Breast epithelium (tissue), 4 donors: ENCODE measurements at regions of chr4 and their contacts with region 1.

Region 1: DNA sequence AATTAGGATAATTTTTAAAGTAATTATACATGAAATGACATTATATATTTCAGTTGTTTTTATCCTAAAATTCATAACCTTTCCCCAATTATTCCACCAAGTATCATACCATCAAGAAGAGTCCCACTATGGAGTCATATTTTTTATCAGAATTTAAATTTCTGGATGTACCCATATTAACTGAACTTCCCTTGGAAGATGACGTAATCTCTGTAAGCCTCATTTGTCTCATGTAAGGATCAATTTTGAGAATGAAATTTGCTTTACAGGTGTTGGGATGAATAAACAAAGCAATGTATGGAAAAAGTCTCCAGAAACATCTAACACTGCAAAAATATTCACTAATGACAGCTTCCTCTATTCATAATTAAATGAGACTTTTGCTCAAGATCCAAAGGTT is 147.5 kb downstream of the NPFFR2 start:
- DNase-seq: no peak
- H3K4me3 ChIP-seq: no peak overlapping the region
- H3K27ac ChIP-seq: no peak overlapping the region
- H3K4me1 ChIP-seq: no peaks in the 10 kb centered on the region
- H3K27me3 ChIP-seq: no peaks in the 10 kb centered on the region
- CTCF ChIP-seq: no peak
- POLR2A ChIP-seq: no peak

Region 2: DNA sequence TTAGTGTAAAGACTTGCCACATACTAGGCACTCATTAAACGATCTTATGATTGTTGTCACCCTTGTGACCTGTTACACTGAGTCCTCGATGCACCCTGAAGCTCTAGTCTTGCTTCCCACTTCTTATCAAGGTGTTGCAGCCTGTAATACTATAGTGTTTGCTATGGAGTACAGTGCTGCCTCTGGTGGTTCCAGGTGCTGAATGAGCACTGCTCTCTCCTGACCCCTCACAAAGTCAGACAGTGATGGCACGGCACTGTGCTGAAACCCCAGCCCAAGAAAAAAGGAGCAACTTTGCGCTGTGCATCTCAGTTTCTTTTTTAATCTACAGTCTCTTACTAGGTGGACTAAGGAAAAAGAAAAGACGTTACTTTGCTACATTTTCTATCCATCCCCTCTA is 501.8 kb before region 1 on chr4:
- intact Hi-C with region 1: loop called (anchors 5 kb)
- DNase-seq: no peak
- H3K4me3 ChIP-seq: no peak overlapping the region
- H3K27ac ChIP-seq: no peak overlapping the region
- H3K4me1 ChIP-seq: no peaks in the 10 kb centered on the region
- H3K27me3 ChIP-seq: no peaks in the 10 kb centered on the region
- CTCF ChIP-seq: no peak
- POLR2A ChIP-seq: no peak

Region 3: DNA sequence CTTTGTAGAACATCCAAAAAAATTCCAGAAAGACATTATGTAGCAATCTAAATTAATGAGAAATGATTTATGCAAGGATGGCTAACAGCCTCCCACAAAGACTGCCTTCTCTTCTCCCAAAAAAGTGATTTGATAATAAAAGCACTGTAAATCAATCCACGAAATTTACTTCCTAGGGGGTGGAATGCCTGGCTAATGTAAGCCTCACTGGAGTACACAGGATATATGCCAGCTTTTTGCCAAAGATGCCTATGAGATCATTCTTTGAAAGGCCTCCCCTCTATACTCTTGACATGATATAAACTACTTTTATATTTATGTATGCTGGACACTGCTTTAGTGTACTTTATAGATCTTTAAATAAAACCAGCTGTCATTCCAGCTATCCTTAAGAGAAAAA is 178.6 kb after region 1 on chr4:
- intact Hi-C with region 1: no loop called
- DNase-seq: no peak
- H3K4me3 ChIP-seq: no peak overlapping the region
- H3K27ac ChIP-seq: no peak overlapping the region
- H3K4me1 ChIP-seq: peaks cover 0 to under 1% of the 10 kb centered on the region in 2 donors
- H3K27me3 ChIP-seq: no peaks in the 10 kb centered on the region
- CTCF ChIP-seq: no peak
- POLR2A ChIP-seq: no peak